Activated T-helper 2 cell treated with anti-CD3 and anti-CD28 coated beads, Interferon-gamma antibody, Interleukin-2, Interleukin-4, amounts not matched to agents 10 μg/mL and 5 μg/mL and 100 μg/mL, durations not matched to agents 14 hours and 24 hours and 36 hours (primary cell): ENCODE measurements at regions of chr11 and their contacts with region 1.

Region 1: DNA sequence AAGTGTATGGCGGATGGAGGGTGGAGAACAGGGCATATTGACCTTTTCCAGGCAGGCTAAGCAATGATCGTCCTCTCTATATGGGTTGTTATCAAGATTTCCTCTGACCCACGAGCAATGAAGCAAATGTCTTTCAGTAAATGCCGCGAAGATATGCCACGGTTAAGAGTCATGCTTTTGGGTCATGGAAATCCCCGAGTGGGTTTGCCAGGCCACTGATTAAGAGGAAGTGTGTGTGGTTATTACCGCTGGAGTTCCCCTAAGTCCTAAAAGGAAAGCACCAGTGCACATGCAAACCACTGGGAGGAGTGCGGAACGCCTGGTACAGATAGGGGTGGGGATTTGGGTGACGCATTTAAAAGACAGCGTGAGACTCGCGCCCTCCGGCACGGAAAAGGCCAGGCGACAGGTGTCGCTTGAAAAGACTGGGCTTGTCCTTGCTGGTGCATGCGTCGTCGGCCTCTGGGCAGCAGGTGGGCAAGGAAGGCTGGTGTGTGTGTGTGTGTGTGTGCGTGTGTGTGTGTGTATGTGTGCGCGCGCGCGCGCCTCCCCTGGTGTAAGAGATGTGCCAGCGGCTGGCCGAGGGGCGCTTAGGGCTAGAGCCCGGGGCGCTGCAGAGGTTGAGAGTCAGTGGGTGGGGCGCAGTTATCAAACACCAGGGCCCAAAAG is at the start of gene BIRC3:
- DNase-seq: peak; percentile 91
- H3K4me3 Mint-ChIP-seq: peak within 1 kb of the TSS; percentile 98
- H3K27ac Mint-ChIP-seq: peak within 1 kb of the TSS; percentile 99
- H3K4me1 Mint-ChIP-seq: peaks cover 58% of the 10 kb centered on the region
- H3K27me3 Mint-ChIP-seq: no peaks in the 10 kb centered on the region
- total RNA-seq, gene BIRC3: 217 and 221 TPM in 2 replicates

Region 2: GRCh38 chr11:102293873-102294601 is 23.2 kb before region 1 on chr11:
- intact Hi-C with region 1: loop called (anchors 1 kb)
- DNase-seq: no peak
- H3K4me3 Mint-ChIP-seq: peak overlapping the region; percentile 79
- H3K27ac Mint-ChIP-seq: peak overlapping the region; percentile 95
- H3K4me1 Mint-ChIP-seq: peaks cover 42% of the 10 kb centered on the region
- H3K27me3 Mint-ChIP-seq: no peaks in the 10 kb centered on the region

Region 3: DNA sequence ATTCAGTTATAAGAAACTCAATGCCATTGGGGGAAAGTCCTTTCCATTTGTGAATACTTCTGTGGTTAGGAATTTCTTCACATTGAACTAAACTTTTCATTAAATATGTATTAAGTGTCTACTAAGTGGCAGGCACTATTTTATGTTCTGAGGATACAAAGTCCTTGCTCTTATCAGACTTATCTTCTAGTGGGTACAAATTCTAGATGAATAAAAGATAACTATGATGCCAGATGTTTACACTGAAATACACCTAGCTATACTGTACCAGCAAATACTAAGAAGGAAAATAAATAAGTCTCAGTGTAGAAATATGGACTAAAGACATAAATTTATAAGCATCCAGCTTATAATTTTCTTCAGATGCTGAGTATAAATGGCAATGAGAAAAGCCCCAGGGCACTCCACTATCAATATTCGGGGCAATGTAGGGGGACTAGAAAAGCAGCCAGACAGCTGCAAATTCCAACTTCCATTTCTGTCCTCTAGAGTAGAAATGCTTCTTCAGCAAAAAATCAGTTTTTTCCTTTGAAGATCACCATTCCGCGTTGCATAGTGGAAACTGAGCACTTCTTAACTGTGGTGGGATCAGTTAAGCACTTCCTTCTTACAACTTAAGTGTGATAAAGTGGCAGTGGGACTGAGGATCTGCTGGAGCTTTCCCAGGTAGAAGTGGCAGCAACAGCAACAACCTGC is 11.7 kb before region 1 on chr11:
- intact Hi-C with region 1: loop called (anchors 1 kb)
- DNase-seq: no peak
- H3K4me3 Mint-ChIP-seq: peak overlapping the region; percentile 78
- H3K27ac Mint-ChIP-seq: peak overlapping the region; percentile 84
- H3K4me1 Mint-ChIP-seq: peaks cover 56% of the 10 kb centered on the region
- H3K27me3 Mint-ChIP-seq: no peaks in the 10 kb centered on the region

Region 4: DNA sequence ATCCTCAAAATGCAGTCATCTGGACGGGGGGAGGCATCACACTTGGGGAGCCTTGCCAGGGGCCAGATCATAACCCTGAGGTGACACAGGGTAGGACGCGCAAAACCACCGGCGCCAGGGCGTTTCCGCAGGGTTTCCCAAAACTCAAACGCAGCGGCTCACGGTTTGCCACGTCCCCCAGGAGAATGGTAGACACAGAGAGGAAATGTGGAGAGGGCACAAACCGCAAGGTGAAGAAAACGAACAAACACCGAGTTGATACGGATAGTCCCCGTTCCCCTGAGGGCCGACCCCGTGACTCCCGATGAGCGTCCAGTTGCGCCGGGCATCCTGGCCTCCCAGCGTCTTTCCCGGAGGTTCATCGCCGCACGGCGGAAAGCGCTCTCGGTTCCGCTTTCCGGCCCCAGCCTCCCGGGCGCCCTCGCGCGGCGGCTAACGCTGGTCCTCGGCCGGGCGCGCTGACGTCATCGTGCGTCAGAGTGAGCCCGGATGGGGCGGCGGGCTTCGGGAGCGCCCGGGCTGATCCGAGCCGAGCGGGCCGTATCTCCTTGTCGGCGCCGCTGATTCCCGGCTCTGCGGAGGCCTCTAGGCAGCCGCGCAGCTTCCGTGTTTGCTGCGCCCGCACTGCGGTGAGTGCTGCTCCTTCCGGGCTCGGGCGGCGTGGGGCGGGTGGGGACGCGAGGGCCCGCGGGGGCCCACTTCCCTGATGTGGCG is 29.7 kb after region 1 on chr11 and contains the start of gene BIRC2:
- intact Hi-C with region 1: loop called (anchors 1 kb)
- DNase-seq: peak; percentile 92
- H3K4me3 Mint-ChIP-seq: peak within 1 kb of the TSS; percentile 98
- H3K27ac Mint-ChIP-seq: peak within 1 kb of the TSS; percentile 98
- H3K4me1 Mint-ChIP-seq: peaks cover 29% of the 10 kb centered on the region
- H3K27me3 Mint-ChIP-seq: no peaks in the 10 kb centered on the region
- total RNA-seq, gene BIRC2: 28.0 and 30.4 TPM in 2 replicates

Region 5: DNA sequence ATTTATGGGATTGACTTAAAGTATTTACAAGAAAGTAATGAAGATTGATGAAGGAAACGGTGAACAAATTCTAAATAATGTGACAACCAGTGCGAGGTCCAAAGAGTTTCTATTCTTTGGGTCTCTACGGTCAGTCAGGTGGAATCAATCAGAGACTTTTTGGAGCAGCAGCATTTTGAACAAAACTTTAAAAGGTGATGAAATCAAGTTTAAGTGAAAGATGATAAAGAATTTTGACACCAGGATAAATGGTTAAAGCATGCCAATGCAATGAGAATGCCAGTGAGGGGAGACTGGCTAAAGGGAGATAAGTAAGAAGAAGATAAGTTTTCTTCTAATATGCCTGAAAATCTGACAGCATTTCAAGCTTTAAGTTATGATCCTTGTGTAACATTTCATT is 706.9 kb after region 1 on chr11:
- intact Hi-C with region 1: loop called (anchors 10 kb)
- DNase-seq: no peak
- H3K4me3 Mint-ChIP-seq: no peak overlapping the region
- H3K27ac Mint-ChIP-seq: no peak overlapping the region
- H3K4me1 Mint-ChIP-seq: peaks cover 12% of the 10 kb centered on the region
- H3K27me3 Mint-ChIP-seq: peaks cover 10% of the 10 kb centered on the region